Activated naive CD4-positive, alpha-beta T cell treated with anti-CD3 and anti-CD28 coated beads for 36 hours (primary cell): ENCODE measurements at regions of chr1 and their contacts with region 1.

Region 1: GRCh38 chr1:21255278-21255942 is 34.9 kb downstream of the ECE1 start:
- DNase-seq: peak; percentile 90
- H3K4me3 Mint-ChIP-seq: no peak overlapping the region
- H3K27ac Mint-ChIP-seq: peak overlapping the region; percentile 66
- H3K4me1 Mint-ChIP-seq: peaks cover 53% of the 10 kb centered on the region
- H3K27me3 Mint-ChIP-seq: no peaks in the 10 kb centered on the region

Region 2: DNA sequence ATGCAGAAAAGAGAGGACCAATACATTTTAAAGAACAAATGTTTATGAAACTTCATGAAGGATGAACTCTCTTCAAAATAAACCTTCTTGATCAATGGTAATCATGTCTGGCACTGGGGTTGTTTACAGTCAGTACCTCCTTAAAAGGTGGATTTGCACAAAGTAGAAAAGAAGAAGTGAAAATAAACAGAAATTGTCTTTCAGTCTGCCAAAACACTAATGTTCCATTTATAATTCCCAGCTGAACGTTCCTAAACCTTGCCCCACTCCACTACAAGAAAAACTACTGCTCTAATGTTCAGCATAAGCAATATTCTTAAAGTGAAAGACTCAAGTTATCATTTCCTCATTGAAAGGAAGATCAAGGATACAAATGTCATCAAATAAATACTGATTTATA is 164.9 kb before region 1 on chr1:
- CTCF ChIA-PET with region 1: no interaction called
- intact Hi-C with region 1: no loop called
- DNase-seq: no peak
- H3K4me3 Mint-ChIP-seq: no peak overlapping the region
- H3K27ac Mint-ChIP-seq: no peak overlapping the region
- H3K4me1 Mint-ChIP-seq: peaks cover 6% of the 10 kb centered on the region
- H3K27me3 Mint-ChIP-seq: no peaks in the 10 kb centered on the region

Region 3: DNA sequence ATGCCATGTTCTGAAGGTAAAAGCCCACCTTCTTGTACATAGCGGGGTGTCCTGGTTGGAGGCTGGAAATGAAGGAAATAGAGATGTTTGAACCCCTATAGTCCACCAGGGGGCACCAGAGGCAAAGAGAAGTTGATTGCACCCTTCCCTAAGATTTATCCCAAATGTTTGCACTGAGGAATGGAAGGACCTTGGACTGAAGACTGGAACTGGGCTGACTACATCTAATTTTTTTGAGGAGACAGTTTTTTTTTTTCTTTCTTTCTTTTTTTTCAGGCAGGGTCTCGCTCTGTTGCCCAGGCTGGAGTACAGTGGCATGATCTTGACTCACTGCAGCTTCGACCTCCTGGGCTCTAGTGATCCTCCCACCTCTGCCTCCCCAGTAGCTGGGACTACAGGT is 23.4 kb before region 1 on chr1:
- CTCF ChIA-PET with region 1: interaction called, 18 read pairs
- intact Hi-C with region 1: no loop called
- DNase-seq: peak; percentile 42
- H3K4me3 Mint-ChIP-seq: no peak overlapping the region
- H3K27ac Mint-ChIP-seq: no peak overlapping the region
- H3K4me1 Mint-ChIP-seq: no peaks in the 10 kb centered on the region
- H3K27me3 Mint-ChIP-seq: no peaks in the 10 kb centered on the region

Region 4: GRCh38 chr1:21324368-21325141 is 69.1 kb after region 1 on chr1:
- CTCF ChIA-PET with region 1: interaction called, 10 read pairs
- intact Hi-C with region 1: no loop called
- DNase-seq: peak; percentile 89
- H3K4me3 Mint-ChIP-seq: peak overlapping the region; percentile 63
- H3K27ac Mint-ChIP-seq: peak overlapping the region; percentile 97
- H3K4me1 Mint-ChIP-seq: peaks cover 90% of the 10 kb centered on the region
- H3K27me3 Mint-ChIP-seq: no peaks in the 10 kb centered on the region

Region 5: GRCh38 chr1:21334214-21335087 is 79.0 kb after region 1 on chr1:
- CTCF ChIA-PET with region 1: interaction called, 12 read pairs
- intact Hi-C with region 1: loop called (anchors 1 kb)
- DNase-seq: peak; percentile 86
- H3K4me3 Mint-ChIP-seq: peak overlapping the region; percentile 87
- H3K27ac Mint-ChIP-seq: peak overlapping the region; percentile 99
- H3K4me1 Mint-ChIP-seq: peaks cover 91% of the 10 kb centered on the region
- H3K27me3 Mint-ChIP-seq: no peaks in the 10 kb centered on the region

Region 6: GRCh38 chr1:21344750-21345443 is 89.5 kb after region 1 on chr1:
- CTCF ChIA-PET with region 1: interaction called, 3 read pairs
- intact Hi-C with region 1: loop called (anchors 2 kb)
- DNase-seq: no peak
- H3K4me3 Mint-ChIP-seq: peak overlapping the region; percentile 92
- H3K27ac Mint-ChIP-seq: peak overlapping the region; percentile 92
- H3K4me1 Mint-ChIP-seq: peaks cover 39% of the 10 kb centered on the region
- H3K27me3 Mint-ChIP-seq: no peaks in the 10 kb centered on the region

Region 7: DNA sequence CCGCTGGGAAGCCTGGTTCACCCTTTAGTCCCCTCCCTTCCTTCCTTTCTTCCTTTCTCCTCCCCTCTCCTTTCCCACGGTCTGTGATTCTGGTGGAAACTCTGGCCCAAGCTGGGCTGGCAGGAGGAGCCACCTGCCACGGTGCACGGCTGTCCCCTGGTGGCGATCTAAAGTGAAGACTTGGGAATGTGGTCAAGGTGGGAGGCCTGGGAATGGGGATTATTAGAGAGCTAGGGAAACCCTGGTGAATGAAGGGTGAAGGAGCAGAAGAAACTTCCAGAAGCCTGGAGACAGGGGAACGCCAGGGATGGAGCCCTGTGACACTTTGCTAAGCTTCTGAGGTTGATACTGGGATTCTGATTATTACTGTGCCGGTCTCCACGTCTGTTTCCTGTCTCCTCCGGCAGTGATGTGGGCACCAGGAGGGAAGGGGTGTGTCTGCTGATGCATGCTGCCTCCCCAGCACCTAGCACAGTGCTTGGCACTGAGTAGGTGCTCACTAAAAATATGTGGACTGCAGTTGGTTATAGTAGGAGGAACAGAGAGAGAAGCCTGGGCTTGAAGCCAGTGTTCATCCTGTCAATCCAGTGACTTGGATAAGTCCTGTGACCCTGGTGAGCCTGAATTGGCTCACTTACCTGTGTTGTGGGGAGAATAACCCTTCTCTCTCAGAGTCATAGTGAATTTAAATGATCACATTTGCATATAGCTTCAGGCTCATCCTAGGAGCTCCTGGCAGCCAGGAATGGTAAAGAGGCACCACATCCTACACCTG is 113.3 kb after region 1 on chr1:
- CTCF ChIA-PET with region 1: interaction called, 80 read pairs
- intact Hi-C with region 1: loop called (anchors 1 kb)
- DNase-seq: peak; percentile 70
- H3K4me3 Mint-ChIP-seq: no peak overlapping the region
- H3K27ac Mint-ChIP-seq: peak overlapping the region; percentile 43
- H3K4me1 Mint-ChIP-seq: peaks cover 12% of the 10 kb centered on the region
- H3K27me3 Mint-ChIP-seq: no peaks in the 10 kb centered on the region

Region 8: DNA sequence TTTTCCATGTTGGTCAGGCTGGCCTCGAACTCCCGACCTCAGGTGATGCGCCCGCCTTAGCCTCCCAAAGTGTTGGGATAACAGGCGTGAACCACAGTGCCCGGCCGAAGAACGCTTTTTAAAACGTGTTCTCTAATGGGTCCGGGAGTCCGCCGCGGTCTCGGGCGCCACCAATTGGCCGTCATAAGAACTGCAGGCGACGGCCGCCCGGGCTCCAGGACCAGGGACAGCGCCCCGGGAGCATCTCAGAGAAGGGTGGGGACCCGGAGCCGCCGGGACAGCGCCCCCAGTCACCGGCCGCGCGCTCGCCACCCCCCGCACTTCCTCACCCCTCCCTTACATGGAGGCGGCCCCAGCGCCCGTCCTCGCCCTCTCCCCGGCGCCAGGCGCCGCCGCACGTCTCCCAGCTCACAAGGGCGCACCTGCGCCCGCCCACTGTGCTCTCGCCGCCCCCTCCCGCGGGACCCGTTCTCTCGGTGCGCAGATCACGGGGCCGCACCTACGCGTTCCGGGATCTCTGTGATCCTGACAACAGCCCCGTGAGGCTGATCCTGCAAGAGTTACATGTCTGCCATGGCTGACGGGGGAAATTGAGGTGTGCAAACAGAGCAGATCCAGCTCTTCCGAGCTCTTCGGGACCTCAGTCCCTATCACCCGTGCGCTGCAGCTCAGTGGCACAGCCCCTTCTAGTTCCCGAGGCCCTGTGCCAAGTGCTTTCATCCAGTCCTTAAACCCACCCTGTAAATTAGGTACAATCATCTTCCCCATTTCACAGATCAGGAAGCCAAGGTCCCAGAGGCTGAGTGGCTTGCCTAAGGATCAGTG is 403.9 kb after region 1 on chr1:
- CTCF ChIA-PET with region 1: no interaction called
- intact Hi-C with region 1: loop called (anchors 10 kb)
- DNase-seq: peak; percentile 80
- H3K4me3 Mint-ChIP-seq: peak overlapping the region; percentile 22
- H3K27ac Mint-ChIP-seq: no peak overlapping the region
- H3K4me1 Mint-ChIP-seq: peaks cover 5% of the 10 kb centered on the region
- H3K27me3 Mint-ChIP-seq: peaks cover 20% of the 10 kb centered on the region